ENCODE measurements at regions of chr6 and their contacts with region 1.

Region 1: GRCh38 chr6:138588805-138589434 is 89.6 kb upstream of the NHSL1 start:
- DNase-seq: peak; percentile 46 to 60 (median 52)
- H3K4me3 ChIP-seq: no peak overlapping the region
- H3K4me3 Mint-ChIP-seq: no peak overlapping the region
- H3K27ac ChIP-seq: no peak overlapping the region
- H3K27ac Mint-ChIP-seq: peak overlapping the region in 1 of 7 donors; percentile 0
- H3K4me1 ChIP-seq: peaks cover 16% of the 10 kb centered on the region
- H3K4me1 Mint-ChIP-seq: peaks cover 14 to 20% (median 19%) of the 10 kb centered on the region in 4 donors
- H3K27me3 ChIP-seq: no peaks in the 10 kb centered on the region
- H3K27me3 Mint-ChIP-seq: peaks cover 0 to 2% of the 10 kb centered on the region in 2 donors

Region 2: DNA sequence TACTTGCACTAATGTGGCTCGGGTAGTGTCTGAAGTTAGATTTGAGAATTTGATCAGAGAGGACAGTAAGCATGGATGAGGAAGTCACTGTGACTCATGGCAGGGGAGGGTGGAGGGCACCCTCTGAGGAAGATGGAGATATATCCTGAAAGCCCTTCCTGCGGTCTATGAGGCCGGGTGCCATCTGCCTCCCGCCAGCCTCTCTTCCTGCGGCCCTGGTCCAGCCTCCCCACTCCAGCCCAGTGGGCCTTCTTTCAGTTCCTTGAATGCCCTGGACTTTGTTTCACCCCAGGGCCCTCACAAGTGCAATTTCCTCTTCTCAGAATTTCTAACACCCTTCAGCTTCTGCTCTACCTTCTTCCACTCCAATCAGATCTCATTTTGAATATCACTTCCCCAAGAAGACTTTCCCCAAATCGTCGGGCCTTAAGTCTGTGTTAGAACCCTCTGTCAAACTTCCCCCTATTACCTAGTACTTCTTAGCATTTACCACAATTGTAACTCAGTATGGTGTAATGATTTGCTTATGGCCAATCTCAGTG is 742.1 kb before region 1 on chr6:
- CTCF ChIA-PET with region 1: no interaction called
- POLR2A ChIA-PET with region 1: no interaction called
- intact Hi-C with region 1: no loop called
- DNase-seq: no peak
- H3K4me3 ChIP-seq: no peak overlapping the region
- H3K4me3 Mint-ChIP-seq: no peak overlapping the region
- H3K27ac ChIP-seq: no peak overlapping the region
- H3K27ac Mint-ChIP-seq: no peak overlapping the region
- H3K4me1 ChIP-seq: no peaks in the 10 kb centered on the region
- H3K4me1 Mint-ChIP-seq: no peaks in the 10 kb centered on the region
- H3K27me3 ChIP-seq: no peaks in the 10 kb centered on the region
- H3K27me3 Mint-ChIP-seq: peaks cover 0 to 3% of the 10 kb centered on the region in 2 donors

Region 3: DNA sequence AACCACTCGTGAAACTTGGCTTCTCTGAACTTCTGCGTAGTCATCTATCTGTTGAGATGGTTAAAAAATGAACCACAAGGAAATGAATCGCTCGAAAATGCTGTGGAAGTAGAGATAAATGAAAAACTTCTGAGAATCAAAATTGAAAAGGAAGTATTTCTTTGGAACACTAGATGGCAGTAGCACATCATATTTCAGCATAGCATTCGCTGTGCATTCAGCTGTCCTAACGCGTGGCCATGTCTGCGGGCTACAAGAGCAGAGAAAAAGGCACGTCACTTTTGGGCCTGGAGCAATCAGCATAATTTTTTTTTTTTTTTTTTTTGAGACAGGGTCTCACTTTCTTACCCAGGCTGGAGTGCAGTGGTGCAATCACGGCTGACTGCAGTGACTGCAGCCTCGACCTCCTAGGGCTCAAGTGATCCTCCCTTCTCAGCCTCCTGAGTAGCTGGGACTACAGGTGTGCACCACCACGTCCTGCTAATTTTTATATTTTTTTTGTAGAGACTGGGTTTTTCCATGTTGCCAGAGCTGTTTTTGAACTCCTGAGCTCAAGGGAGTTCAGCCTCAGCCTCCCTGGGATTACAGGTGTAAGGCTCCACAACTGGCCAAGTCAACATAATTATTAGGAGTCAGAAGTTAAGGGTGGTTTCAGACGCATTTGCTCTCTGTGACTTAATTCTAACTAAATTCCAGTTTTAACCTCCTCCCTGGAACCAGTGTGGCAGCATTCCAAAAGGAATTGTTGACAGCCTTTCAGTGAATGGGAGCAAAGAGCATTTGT is 472.9 kb before region 1 on chr6:
- CTCF ChIA-PET with region 1: interaction called, 11 read pairs
- POLR2A ChIA-PET with region 1: no interaction called
- intact Hi-C with region 1: loop called (anchors 1 kb)
- DNase-seq: peak; percentile 53 to 64 (median 62)
- H3K4me3 ChIP-seq: no peak overlapping the region
- H3K4me3 Mint-ChIP-seq: peak overlapping the region in 1 of 8 donors; percentile 20
- H3K27ac ChIP-seq: no peak overlapping the region
- H3K27ac Mint-ChIP-seq: no peak overlapping the region
- H3K4me1 ChIP-seq: no peaks in the 10 kb centered on the region
- H3K4me1 Mint-ChIP-seq: peaks cover 3 to 5% (median 4%) of the 10 kb centered on the region in 4 donors
- H3K27me3 ChIP-seq: no peaks in the 10 kb centered on the region
- H3K27me3 Mint-ChIP-seq: peaks cover 20 to 21% of the 10 kb centered on the region in 2 donors

Region 4: GRCh38 chr6:138129190-138129589 is 459.7 kb before region 1 on chr6:
- CTCF ChIA-PET with region 1: no interaction called
- POLR2A ChIA-PET with region 1: no interaction called
- intact Hi-C with region 1: no loop called
- DNase-seq: no peak
- H3K4me3 ChIP-seq: no peak overlapping the region
- H3K4me3 Mint-ChIP-seq: no peak overlapping the region
- H3K27ac ChIP-seq: no peak overlapping the region
- H3K27ac Mint-ChIP-seq: no peak overlapping the region
- H3K4me1 ChIP-seq: no peaks in the 10 kb centered on the region
- H3K4me1 Mint-ChIP-seq: no peaks in the 10 kb centered on the region
- H3K27me3 ChIP-seq: no peaks in the 10 kb centered on the region
- H3K27me3 Mint-ChIP-seq: peaks cover 6 to 7% of the 10 kb centered on the region in 2 donors

Region 5: GRCh38 chr6:138346302-138347195 is 242.4 kb before region 1 on chr6:
- CTCF ChIA-PET with region 1: no interaction called
- POLR2A ChIA-PET with region 1: no interaction called
- intact Hi-C with region 1: no loop called
- DNase-seq: no peak
- H3K4me3 ChIP-seq: no peak overlapping the region
- H3K4me3 Mint-ChIP-seq: no peak overlapping the region
- H3K27ac ChIP-seq: no peak overlapping the region
- H3K27ac Mint-ChIP-seq: no peak overlapping the region
- H3K4me1 ChIP-seq: no peaks in the 10 kb centered on the region
- H3K4me1 Mint-ChIP-seq: peaks cover 0 to 3% (median under 1%) of the 10 kb centered on the region in 4 donors
- H3K27me3 ChIP-seq: no peaks in the 10 kb centered on the region
- H3K27me3 Mint-ChIP-seq: peaks cover 9 to 20% of the 10 kb centered on the region in 2 donors

Region 6: DNA sequence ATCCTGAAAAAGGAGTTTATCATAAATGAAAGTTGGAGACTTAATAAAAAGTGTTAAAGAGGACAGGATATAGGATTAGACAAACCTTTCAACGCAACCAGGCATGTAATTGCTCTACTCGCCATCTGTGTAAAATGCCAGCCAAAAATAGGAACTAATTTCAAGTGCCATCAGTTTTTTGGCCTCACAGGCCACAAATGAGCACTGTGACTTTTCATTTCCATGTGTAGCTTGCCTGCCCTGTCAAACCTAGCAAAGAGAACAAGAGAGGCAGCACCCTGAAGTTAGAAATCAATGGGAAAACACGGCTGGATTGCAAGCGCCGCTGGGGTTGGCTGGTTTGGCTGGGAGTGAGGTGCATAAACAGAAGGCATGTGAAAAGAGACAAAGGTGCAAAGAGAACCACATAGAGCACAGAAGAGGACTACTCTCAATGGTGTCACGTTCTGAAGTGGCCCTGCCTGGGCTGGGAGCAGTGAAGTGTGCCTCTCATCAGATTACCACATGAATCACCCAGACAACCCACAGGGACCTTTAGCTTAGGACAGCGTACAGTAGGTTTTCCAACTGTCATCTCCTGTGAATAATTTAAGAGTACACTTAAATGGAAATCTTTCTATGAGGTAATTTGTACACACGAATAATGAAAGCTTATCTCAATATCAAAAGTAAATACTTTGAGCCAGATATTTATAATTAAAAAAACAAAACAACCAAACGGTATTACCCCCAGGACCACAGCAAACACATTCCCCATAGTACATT is 11.6 kb before region 1 on chr6:
- CTCF ChIA-PET with region 1: interaction called, 13 read pairs
- POLR2A ChIA-PET with region 1: no interaction called
- intact Hi-C with region 1: no loop called
- DNase-seq: no peak
- H3K4me3 ChIP-seq: no peak overlapping the region
- H3K4me3 Mint-ChIP-seq: no peak overlapping the region
- H3K27ac ChIP-seq: no peak overlapping the region
- H3K27ac Mint-ChIP-seq: no peak overlapping the region
- H3K4me1 ChIP-seq: no peaks in the 10 kb centered on the region
- H3K4me1 Mint-ChIP-seq: peaks cover 0 to 3% (median 0%) of the 10 kb centered on the region in 4 donors
- H3K27me3 ChIP-seq: no peaks in the 10 kb centered on the region
- H3K27me3 Mint-ChIP-seq: peaks cover 3 to 12% of the 10 kb centered on the region in 2 donors

Region 7: DNA sequence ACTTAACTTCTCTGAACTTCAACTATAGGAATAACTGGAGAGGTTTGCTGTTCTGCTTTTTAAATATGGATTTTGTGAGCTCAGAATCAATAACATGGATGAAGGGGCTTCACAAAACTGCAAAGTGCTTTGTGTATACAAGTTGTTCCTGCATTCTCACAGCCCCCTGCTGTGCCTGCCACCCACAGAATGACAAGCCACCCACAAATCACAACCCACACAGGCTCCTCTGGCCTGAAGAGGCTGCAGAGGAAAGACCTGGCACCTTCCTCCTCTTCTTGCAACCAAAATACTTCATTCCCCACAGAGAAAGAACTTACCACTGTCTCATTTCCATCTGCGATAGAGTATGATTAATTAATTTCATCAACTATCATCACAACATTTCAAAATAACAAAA is 17.0 kb after region 1 on chr6:
- CTCF ChIA-PET with region 1: interaction called, 17 read pairs
- POLR2A ChIA-PET with region 1: no interaction called
- intact Hi-C with region 1: no loop called
- DNase-seq: no peak
- H3K4me3 ChIP-seq: no peak overlapping the region
- H3K4me3 Mint-ChIP-seq: no peak overlapping the region
- H3K27ac ChIP-seq: no peak overlapping the region
- H3K27ac Mint-ChIP-seq: no peak overlapping the region
- H3K4me1 ChIP-seq: no peaks in the 10 kb centered on the region
- H3K4me1 Mint-ChIP-seq: no peaks in the 10 kb centered on the region
- H3K27me3 ChIP-seq: no peaks in the 10 kb centered on the region
- H3K27me3 Mint-ChIP-seq: peaks cover 7 to 12% of the 10 kb centered on the region in 2 donors

Region 8: GRCh38 chr6:138765896-138766655 is 177.2 kb after region 1 on chr6:
- CTCF ChIA-PET with region 1: interaction called, 114 read pairs
- POLR2A ChIA-PET with region 1: no interaction called
- intact Hi-C with region 1: loop called (anchors 1 kb)
- DNase-seq: peak in 4 of 5 donors; percentile 31 to 36 (median 34)
- H3K4me3 ChIP-seq: no peak overlapping the region
- H3K4me3 Mint-ChIP-seq: no peak overlapping the region
- H3K27ac ChIP-seq: no peak overlapping the region
- H3K27ac Mint-ChIP-seq: no peak overlapping the region
- H3K4me1 ChIP-seq: no peaks in the 10 kb centered on the region
- H3K4me1 Mint-ChIP-seq: no peaks in the 10 kb centered on the region
- H3K27me3 ChIP-seq: no peaks in the 10 kb centered on the region
- H3K27me3 Mint-ChIP-seq: peaks cover 0 to 2% of the 10 kb centered on the region in 2 donors

Region 9: GRCh38 chr6:140427849-140428248 is 1838.9 kb after region 1 on chr6:
- CTCF ChIA-PET with region 1: no interaction called
- POLR2A ChIA-PET with region 1: no interaction called
- intact Hi-C with region 1: no loop called
- DNase-seq: no peak
- H3K4me3 ChIP-seq: no peak overlapping the region
- H3K4me3 Mint-ChIP-seq: no peak overlapping the region
- H3K27ac ChIP-seq: no peak overlapping the region
- H3K27ac Mint-ChIP-seq: no peak overlapping the region
- H3K4me1 ChIP-seq: no peaks in the 10 kb centered on the region
- H3K4me1 Mint-ChIP-seq: no peaks in the 10 kb centered on the region
- H3K27me3 ChIP-seq: no peaks in the 10 kb centered on the region
- H3K27me3 Mint-ChIP-seq: peaks cover 0 to 2% of the 10 kb centered on the region in 2 donors

Measured in CD4-positive, alpha-beta memory T cell (primary cell).